Activated B cell treated with CpG ODN at 0.5 μM for 24 hours (primary cell): ENCODE measurements at regions of chr11 and their contacts with region 1.

Region 1: DNA sequence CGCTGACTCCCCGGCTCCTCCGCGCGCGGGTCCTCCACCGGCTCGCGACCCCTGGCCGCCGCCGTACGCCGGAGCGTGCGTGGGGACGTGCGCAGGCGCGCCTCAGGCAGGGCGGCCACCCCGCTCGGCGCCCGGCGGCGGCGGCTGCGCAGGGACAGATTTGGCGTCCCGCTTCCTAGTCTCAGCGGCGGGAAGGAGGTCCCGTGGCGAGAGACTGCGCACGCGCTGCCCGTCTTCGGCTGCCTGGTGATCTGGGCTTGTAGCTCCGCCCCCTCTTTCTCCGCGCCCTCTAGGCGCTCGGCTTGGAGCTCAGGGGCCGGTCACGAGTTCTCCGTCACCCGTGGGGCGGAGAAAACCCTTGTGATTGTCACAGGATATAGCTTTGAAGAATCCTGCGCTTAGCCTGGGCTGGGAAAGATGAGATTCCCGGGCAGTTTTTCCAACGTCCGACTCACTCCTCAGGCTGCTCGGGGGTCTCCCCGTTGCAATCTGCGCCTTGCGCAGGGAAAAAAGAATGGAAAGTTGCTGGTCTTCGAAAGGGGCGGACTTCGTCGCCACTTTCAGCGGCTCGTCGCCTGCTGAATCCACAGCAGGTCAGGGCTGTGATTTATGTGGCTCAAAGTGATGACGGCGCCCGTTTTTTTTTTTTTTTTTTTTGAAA is at the start of gene PATL1:
- DNase-seq: peak; percentile 95
- ATAC-seq: peak; percentile 88
- H3K4me3 Mint-ChIP-seq: peak within 1 kb of the TSS; percentile 93
- H3K27ac Mint-ChIP-seq: peak within 1 kb of the TSS; percentile 97
- H3K4me1 Mint-ChIP-seq: peaks cover 27% of the 10 kb centered on the region
- H3K27me3 Mint-ChIP-seq: no peaks in the 10 kb centered on the region
- CTCF ChIP-seq: no peak
- total RNA-seq, gene PATL1: 42.0 and 45.1 TPM in 2 replicates

Region 2: DNA sequence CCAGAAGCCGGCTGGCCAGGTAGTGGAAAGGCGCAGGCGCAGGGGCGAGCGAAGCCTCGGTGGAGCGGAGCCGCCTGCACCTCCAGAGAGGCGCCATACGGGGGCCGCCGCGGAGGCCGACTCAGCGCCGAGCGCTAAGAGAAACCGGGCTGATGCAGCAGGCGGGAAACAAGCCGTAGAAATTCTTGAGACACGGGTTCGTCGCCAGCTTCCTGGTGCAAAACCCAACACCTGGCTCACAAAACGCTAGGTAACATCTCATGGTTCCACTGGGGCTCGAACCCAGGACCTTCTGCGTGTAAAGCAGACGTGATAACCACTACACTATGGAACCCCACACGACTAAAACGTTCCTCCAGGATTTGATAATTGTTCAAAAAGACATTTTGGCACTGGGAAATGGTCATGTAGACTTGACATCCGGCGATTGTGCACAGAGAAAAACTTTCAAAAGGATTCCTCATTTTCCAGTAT is 118.7 kb before region 1 on chr11:
- CTCF ChIA-PET with region 1: no interaction called
- POLR2A ChIA-PET with region 1: interaction called, 9 read pairs
- intact Hi-C with region 1: loop called (anchors 1 kb)
- DNase-seq: peak; percentile 75
- ATAC-seq: peak; percentile 91
- H3K4me3 Mint-ChIP-seq: peak overlapping the region; percentile 87
- H3K27ac Mint-ChIP-seq: peak overlapping the region; percentile 94
- H3K4me1 Mint-ChIP-seq: peaks cover 31% of the 10 kb centered on the region
- H3K27me3 Mint-ChIP-seq: no peaks in the 10 kb centered on the region
- CTCF ChIP-seq: peak; percentile 43

Region 3: GRCh38 chr11:59560702-59561469 is 108.2 kb before region 1 on chr11:
- CTCF ChIA-PET with region 1: no interaction called
- POLR2A ChIA-PET with region 1: interaction called, 16 read pairs
- intact Hi-C with region 1: no loop called
- DNase-seq: peak; percentile 62
- ATAC-seq: peak; percentile 78
- H3K4me3 Mint-ChIP-seq: peak overlapping the region; percentile 92
- H3K27ac Mint-ChIP-seq: peak overlapping the region; percentile 91
- H3K4me1 Mint-ChIP-seq: peaks cover 43% of the 10 kb centered on the region
- H3K27me3 Mint-ChIP-seq: peaks cover 3% of the 10 kb centered on the region
- CTCF ChIP-seq: no peak

Region 4: DNA sequence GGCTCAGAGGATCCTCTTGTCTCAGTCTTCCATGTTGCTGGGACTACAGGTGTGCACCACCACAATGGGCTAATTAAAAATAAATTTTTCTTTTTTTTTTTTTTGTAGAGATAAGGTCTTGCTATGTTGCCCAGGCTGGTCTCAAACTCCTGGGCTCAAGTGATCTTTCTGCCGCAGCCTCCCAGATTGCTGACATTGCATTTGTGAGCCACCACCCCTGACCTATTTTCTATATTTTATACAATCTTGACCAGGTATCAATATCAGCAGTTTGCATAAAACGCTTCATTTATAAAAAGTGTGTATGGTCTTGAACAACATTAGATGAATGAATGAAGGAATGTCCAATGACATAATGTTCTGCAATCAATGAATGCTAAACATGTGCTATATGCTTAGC is 77.0 kb after region 1 on chr11:
- CTCF ChIA-PET with region 1: no interaction called
- POLR2A ChIA-PET with region 1: no interaction called
- intact Hi-C with region 1: no loop called
- DNase-seq: no peak
- ATAC-seq: no peak
- H3K4me3 Mint-ChIP-seq: no peak overlapping the region
- H3K27ac Mint-ChIP-seq: no peak overlapping the region
- H3K4me1 Mint-ChIP-seq: no peaks in the 10 kb centered on the region
- H3K27me3 Mint-ChIP-seq: peaks cover 35% of the 10 kb centered on the region
- CTCF ChIP-seq: no peak

Region 5: GRCh38 chr11:59771605-59772004 is 102.5 kb after region 1 on chr11:
- CTCF ChIA-PET with region 1: no interaction called
- POLR2A ChIA-PET with region 1: interaction called, 10 read pairs
- intact Hi-C with region 1: no loop called
- DNase-seq: no peak
- ATAC-seq: no peak
- H3K4me3 Mint-ChIP-seq: peak overlapping the region; percentile 62
- H3K27ac Mint-ChIP-seq: peak overlapping the region; percentile 92
- H3K4me1 Mint-ChIP-seq: peaks cover 35% of the 10 kb centered on the region
- H3K27me3 Mint-ChIP-seq: no peaks in the 10 kb centered on the region
- CTCF ChIP-seq: no peak

Region 6: GRCh38 chr11:59810189-59810910 is 141.3 kb after region 1 on chr11 and contains the start of gene MRPL16:
- CTCF ChIA-PET with region 1: no interaction called
- POLR2A ChIA-PET with region 1: interaction called, 7 read pairs
- intact Hi-C with region 1: loop called (anchors 2 kb)
- DNase-seq: peak; percentile 81
- ATAC-seq: peak; percentile 98
- H3K4me3 Mint-ChIP-seq: peak within 1 kb of the TSS; percentile 92
- H3K27ac Mint-ChIP-seq: peak within 1 kb of the TSS; percentile 87
- H3K4me1 Mint-ChIP-seq: peaks cover 20% of the 10 kb centered on the region
- H3K27me3 Mint-ChIP-seq: peaks cover 3% of the 10 kb centered on the region
- CTCF ChIP-seq: no peak
- total RNA-seq, gene MRPL16: 56.4 and 57.7 TPM in 2 replicates